Dendritic cell treated with granulocyte-macrophage colony-stimulating factor and Interleukin-4, amounts not matched to agents 40 ng/mL and 50 ng/mL, for 4 days (primary cell): ENCODE measurements at regions of chr2 and their contacts with region 1.

Region 1: GRCh38 chr2:42169100-42169873 is at the start of gene EML4:
- H3K4me3 Mint-ChIP-seq: no peak within 1 kb of the TSS
- H3K27ac Mint-ChIP-seq: no peak within 1 kb of the TSS
- H3K4me1 Mint-ChIP-seq: peaks cover 10% of the 10 kb centered on the region
- H3K27me3 Mint-ChIP-seq: peaks cover 9% of the 10 kb centered on the region

Region 2: GRCh38 chr2:42147641-42148274 is 21.5 kb before region 1 on chr2:
- intact Hi-C with region 1: loop called (anchors 1 kb)
- H3K4me3 Mint-ChIP-seq: no peak overlapping the region
- H3K27ac Mint-ChIP-seq: no peak overlapping the region
- H3K4me1 Mint-ChIP-seq: peaks cover 25% of the 10 kb centered on the region
- H3K27me3 Mint-ChIP-seq: peaks cover 8% of the 10 kb centered on the region

Region 3: DNA sequence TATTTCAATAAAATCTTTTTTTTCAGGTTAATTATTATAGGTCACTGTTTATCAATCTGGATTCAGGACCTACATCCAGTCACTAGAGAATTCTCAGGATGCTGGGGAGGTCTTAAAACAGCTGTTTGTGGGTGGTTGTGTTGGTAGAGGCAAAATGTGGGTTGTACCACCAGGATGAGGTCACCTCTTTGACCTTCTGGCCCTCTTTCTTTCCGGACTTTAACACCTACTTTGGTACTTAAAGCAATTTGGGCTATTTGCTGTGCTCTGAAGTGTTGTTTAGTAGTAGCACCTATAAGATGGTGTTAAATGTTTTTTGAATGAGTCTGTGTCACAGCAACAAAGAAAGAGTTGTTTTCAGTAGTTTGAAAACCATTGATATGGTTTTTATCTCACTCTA is 14.5 kb after region 1 on chr2:
- intact Hi-C with region 1: no loop called
- H3K4me3 Mint-ChIP-seq: no peak overlapping the region
- H3K27ac Mint-ChIP-seq: no peak overlapping the region
- H3K4me1 Mint-ChIP-seq: peaks cover 54% of the 10 kb centered on the region
- H3K27me3 Mint-ChIP-seq: no peaks in the 10 kb centered on the region

Region 4: DNA sequence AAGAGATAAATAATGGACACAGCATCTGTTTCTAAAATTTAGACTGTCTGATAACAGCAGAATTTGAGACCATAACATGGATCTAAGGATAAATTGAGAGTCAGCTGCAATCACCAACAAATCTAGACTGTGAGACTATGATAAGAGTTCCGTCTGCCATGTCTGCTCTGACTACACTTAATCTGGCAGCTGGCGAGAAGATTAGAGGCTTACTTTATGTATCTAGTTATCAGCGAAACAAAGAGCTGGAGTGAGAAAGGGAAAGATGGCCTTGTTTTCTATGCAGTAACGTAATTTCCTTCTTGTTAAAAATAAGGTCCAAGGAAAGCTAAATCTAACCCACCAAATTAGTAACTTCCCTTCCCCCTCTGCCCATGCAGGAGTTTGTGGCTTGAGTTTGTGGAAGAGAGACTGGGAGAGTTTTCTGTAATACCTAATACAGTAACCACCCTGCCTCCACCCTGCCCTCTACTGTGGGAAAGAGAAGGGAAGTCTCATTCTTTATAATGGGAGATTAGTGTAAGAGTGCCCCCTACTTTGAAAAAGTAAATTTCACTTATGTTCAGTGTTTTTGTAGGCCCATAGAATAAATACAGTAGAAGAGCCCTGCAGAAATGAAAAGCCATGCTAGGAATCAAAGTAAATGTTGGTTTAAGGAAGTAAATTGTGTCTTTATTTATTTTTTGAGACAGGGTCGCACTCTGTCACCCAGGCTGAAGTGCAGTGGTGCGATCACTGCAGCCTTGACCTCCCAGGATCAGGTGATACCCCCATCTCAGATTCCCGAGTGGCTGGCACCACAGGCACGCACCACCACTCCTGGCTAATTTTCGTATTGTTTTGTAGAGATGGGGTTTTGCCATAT is 27.3 kb after region 1 on chr2:
- intact Hi-C with region 1: loop called (anchors 2 kb)
- H3K4me3 Mint-ChIP-seq: no peak overlapping the region
- H3K27ac Mint-ChIP-seq: no peak overlapping the region
- H3K4me1 Mint-ChIP-seq: peaks cover 57% of the 10 kb centered on the region
- H3K27me3 Mint-ChIP-seq: peaks cover 12% of the 10 kb centered on the region

Region 5: GRCh38 chr2:42493468-42494354 is 324.4 kb after region 1 on chr2 and contains the start of gene KCNG3:
- intact Hi-C with region 1: no loop called
- H3K4me3 Mint-ChIP-seq: peak within 1 kb of the TSS; percentile 78
- H3K27ac Mint-ChIP-seq: no peak within 1 kb of the TSS
- H3K4me1 Mint-ChIP-seq: peaks cover 10% of the 10 kb centered on the region
- H3K27me3 Mint-ChIP-seq: peaks cover 69% of the 10 kb centered on the region

Region 6: DNA sequence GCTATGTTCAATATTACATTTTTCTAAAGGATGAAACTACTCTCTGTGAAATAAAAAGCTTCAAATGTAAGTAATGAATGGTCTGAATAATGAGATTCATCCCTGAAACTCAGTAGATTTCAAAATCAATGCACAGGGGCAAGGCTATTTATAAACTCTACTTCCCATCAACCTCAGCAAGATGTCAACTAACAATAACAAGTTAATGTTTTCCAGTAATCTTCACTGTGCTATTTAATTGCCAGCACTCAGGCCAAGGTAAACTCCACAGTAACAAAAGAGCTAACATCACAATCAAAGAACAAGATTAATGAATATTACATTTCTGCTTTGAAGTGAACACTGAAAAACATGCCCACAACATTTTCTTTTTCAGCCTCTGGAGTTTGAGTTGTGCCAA is 1201.4 kb after region 1 on chr2:
- intact Hi-C with region 1: no loop called
- H3K4me3 Mint-ChIP-seq: no peak overlapping the region
- H3K27ac Mint-ChIP-seq: no peak overlapping the region
- H3K4me1 Mint-ChIP-seq: peaks cover 38% of the 10 kb centered on the region
- H3K27me3 Mint-ChIP-seq: no peaks in the 10 kb centered on the region